ENCODE measurements at regions of chr20 and their contacts with region 1.

Region 1: DNA sequence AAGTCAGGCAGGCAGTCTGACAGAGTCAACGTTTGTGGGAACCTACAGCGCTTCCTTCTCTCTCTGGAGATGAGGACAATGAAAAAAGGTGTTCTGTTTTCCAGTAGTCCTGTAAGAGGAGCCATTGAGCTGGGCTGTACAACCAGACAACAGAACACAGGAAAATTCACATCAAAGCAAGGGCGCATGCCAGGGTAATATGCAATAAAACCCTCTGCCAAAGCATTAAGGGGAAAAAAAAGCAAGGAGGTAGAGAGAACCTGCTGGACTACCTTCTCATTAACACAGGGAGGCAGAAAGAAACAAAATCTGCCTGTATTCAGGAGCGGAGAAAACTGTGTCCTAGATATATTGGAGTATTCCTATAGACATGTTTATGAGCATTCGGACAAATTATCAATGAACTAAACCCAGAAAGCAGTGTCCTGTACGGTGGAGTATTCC is 1.3 kb downstream of the RNF24 start:
- DNase-seq: peak in 1 of 5 donors; percentile 33
- ATAC-seq: peak in 3 of 4 donors; percentile 47 to 68 (median 48)
- H3K4me3 ChIP-seq: peak overlapping the region in 9 of 12 donors; percentile 80 to 91 (median 88)
- H3K27ac ChIP-seq: peak overlapping the region in 8 of 12 donors; percentile 3 to 90 (median 62)
- H3K4me1 ChIP-seq: peaks cover 0 to 54% (median 11%) of the 10 kb centered on the region in 12 donors
- H3K27me3 ChIP-seq: no peaks in the 10 kb centered on the region
- CTCF ChIP-seq: peak; percentile 33 to 73 (median 54)
- POLR2A ChIP-seq: no peak

Region 2: DNA sequence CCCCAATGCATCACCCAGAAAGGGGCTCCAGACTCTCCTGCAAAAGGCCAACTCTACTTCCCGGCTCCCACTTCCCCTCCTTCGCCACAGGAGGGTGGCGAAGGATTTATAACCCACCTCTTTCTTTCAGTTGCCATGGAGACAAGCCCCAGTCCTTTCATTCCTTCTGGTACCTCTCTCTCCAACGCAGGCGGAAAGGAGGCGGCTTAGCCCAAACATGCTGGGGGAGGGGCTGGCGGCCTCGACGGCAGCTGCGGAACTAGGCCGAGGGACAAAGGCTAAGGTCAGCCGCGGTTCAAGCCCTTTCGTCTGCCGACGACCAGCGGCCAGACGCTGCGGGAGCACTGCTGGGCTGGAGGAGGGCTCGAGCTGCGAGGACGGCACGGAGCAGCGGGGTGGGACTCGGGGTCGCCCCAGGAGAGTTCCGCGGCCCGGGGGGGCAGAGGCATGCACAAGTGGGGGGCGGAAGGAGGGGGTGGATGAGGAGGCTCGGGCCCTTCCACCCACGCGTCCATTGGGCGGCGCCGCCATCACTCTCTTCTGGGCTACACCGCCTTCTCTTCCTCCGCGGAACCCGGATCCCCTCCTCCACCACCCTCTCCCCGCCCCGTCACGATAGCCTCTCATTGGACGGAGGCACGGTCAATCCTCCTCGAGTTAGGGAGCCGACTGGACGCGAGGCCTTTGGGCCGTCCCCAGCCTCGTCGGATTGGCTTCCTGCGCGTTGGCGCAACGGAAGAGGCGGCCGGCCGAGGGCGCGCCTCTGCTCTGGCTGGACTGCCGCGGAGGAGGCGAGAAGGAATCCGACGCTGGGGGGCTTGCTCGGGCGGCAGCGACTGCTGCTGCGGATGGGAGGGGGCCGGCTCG is 125.2 kb before region 1 on chr20 and contains the start of gene PANK2:
- intact Hi-C with region 1: loop called in 7 of 10 experiments (anchors 2 to 10 kb)
- DNase-seq: peak; percentile 99 to 100 (median 100)
- ATAC-seq: peak; percentile 97 to 99 (median 99)
- H3K4me3 ChIP-seq: peak within 1 kb of the TSS; percentile 59 to 100 (median 96)
- H3K27ac ChIP-seq: peak within 1 kb of the TSS; percentile 88 to 99 (median 96)
- H3K4me1 ChIP-seq: peaks cover 10 to 48% (median 42%) of the 10 kb centered on the region in 12 donors
- H3K27me3 ChIP-seq: no peaks in the 10 kb centered on the region
- CTCF ChIP-seq: peak in 11 of 12 donors; percentile 20 to 68 (median 44)
- POLR2A ChIP-seq: peak; percentile 45 to 94
- total RNA-seq, gene PANK2: 15.9 to 28.9 (median 18.1) TPM

Region 3: DNA sequence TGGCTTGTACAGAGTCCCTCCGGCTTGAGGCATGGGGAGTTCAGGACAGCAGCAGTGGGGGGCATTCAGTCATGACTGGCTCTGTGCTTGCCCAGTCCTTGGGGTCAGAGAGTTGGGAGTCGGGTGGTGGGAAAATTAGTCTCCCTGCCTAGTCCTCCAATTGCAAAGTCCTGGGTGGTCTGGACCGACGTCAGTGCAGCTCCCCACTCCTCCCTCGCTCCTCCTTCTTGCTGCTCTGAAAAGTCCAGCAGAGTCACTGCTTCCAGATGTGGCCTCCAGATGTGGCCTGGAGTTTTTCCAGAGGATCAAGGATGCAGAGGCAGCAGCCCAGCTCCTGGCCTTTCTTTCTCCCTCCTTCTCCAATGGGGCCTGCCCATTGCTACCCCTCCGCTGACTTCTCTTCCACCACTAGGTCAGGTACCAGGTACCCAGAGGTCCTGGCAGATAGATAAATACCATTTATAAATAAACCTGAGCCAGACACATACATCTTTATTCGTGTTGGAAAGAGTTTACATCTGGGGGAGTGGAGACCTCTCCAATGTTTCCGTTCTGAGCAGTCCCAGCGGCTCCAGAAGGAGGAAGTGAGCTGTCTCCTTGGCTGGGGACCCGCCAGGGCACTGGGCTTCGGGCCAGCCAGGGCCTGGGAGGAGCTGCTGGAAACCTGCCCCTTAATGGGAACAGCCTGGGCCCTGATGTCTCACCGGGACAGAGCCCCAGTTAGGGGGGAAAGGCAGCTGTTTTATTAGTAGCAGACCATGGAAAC is 50.3 kb after region 1 on chr20:
- intact Hi-C with region 1: loop called in 4 of 10 experiments (anchors 2 to 5 kb)
- DNase-seq: peak; percentile 94 to 96 (median 95)
- ATAC-seq: peak; percentile 86 to 94 (median 91)
- H3K4me3 ChIP-seq: peak overlapping the region in 1 of 12 donors; percentile 21
- H3K27ac ChIP-seq: peak overlapping the region; percentile 62 to 95 (median 80)
- H3K4me1 ChIP-seq: peaks cover 10 to 86% (median 45%) of the 10 kb centered on the region in 12 donors
- H3K27me3 ChIP-seq: no peaks in the 10 kb centered on the region
- CTCF ChIP-seq: peak in 1 of 12 donors; percentile 19
- POLR2A ChIP-seq: no peak

Region 4: DNA sequence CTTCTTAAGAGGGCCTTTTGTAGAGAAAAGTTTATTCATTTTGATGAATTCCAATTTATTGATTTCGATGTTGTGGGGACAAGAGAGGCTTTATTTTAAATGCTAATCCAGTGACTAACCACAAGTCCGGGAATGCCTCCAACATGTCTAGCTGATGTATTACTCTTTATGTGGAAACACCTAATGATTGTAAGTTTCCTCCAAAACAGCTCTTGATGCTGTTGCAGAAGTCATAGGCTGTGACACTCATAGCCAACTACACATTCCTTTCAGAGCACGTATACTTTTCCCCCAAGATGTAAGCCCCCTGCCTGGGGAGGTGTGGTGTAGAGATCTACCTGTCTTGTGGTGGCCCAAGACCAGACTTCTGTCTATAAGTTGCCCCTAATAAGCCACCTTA is 62.6 kb after region 1 on chr20:
- intact Hi-C with region 1: loop called in 5 of 10 experiments (anchors 2 to 5 kb)
- DNase-seq: no peak
- ATAC-seq: no peak
- H3K4me3 ChIP-seq: no peak overlapping the region
- H3K27ac ChIP-seq: no peak overlapping the region
- H3K4me1 ChIP-seq: peaks cover 0 to 15% (median 0%) of the 10 kb centered on the region in 12 donors
- H3K27me3 ChIP-seq: no peaks in the 10 kb centered on the region
- CTCF ChIP-seq: no peak
- POLR2A ChIP-seq: no peak

Region 5: GRCh38 chr20:4091490-4092479 is 77.7 kb after region 1 on chr20:
- intact Hi-C with region 1: loop called in 5 of 10 experiments (anchors 5 kb)
- DNase-seq: peak; percentile 53 to 80 (median 67)
- ATAC-seq: peak; percentile 39 to 74 (median 70)
- H3K4me3 ChIP-seq: no peak overlapping the region
- H3K27ac ChIP-seq: peak overlapping the region in 1 of 12 donors; percentile 22
- H3K4me1 ChIP-seq: peaks cover 0 to 9% (median 0%) of the 10 kb centered on the region in 12 donors
- H3K27me3 ChIP-seq: no peaks in the 10 kb centered on the region
- CTCF ChIP-seq: peak; percentile 49 to 72 (median 60)
- POLR2A ChIP-seq: no peak

Region 6: GRCh38 chr20:4645646-4646045 is 631.6 kb after region 1 on chr20:
- intact Hi-C with region 1: no loop called
- DNase-seq: no peak
- ATAC-seq: no peak
- H3K4me3 ChIP-seq: no peak overlapping the region
- H3K27ac ChIP-seq: no peak overlapping the region
- H3K4me1 ChIP-seq: no peaks in the 10 kb centered on the region
- H3K27me3 ChIP-seq: no peaks in the 10 kb centered on the region
- CTCF ChIP-seq: no peak
- POLR2A ChIP-seq: no peak

Measured in heart left ventricle (tissue), 16 donors.